ENCODE measurements at regions of chr17 and their contacts with region 1.

Region 1: DNA sequence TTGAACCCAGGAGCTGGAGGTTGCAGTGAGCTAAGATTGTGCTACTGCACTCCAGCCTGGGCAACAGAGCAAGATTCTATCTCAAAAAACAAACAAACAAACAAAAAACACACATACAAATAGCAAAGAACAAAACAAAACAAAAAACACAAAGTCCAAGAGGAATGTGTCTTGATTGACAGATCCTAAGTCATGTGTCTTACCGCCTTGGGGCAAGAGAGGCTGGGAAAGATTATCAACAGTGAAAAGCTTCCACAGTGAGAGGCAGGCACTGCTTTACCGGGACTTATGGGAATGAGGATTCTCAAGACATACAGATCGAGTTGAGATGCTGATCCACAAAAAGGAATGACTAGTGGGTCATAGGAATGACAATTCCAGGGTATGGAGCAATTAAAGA is 62.7 kb upstream of the GAS7 start:
- DNase-seq: no peak
- H3K4me3 ChIP-seq: no peak overlapping the region
- H3K27ac ChIP-seq: no peak overlapping the region
- H3K4me1 ChIP-seq: no peaks in the 10 kb centered on the region
- H3K27me3 ChIP-seq: no peaks in the 10 kb centered on the region
- CTCF ChIP-seq: no peak
- EP300 ChIP-seq: no peak
- POLR2A ChIP-seq: no peak

Region 2: GRCh38 chr17:10327640-10328039 is 66.5 kb after region 1 on chr17:
- intact Hi-C with region 1: loop called in 1 of 4 experiments (anchors 2 kb)
- DNase-seq: peak; percentile 54 to 87 (median 71)
- H3K4me3 ChIP-seq: no peak overlapping the region
- H3K27ac ChIP-seq: no peak overlapping the region
- H3K4me1 ChIP-seq: no peaks in the 10 kb centered on the region
- H3K27me3 ChIP-seq: no peaks in the 10 kb centered on the region
- CTCF ChIP-seq: peak; percentile 23 to 63 (median 25)
- EP300 ChIP-seq: no peak
- POLR2A ChIP-seq: no peak